ENCODE measurements at regions of chr19 and their contacts with region 1.

Region 1: GRCh38 chr19:57240311-57241090 is at the start of gene ZNF805:
- DNase-seq: peak; percentile 82 to 96 (median 93)
- ATAC-seq: peak; percentile 97
- H3K4me3 ChIP-seq: peak within 1 kb of the TSS; percentile 73
- H3K4me3 Mint-ChIP-seq: peak within 1 kb of the TSS; percentile 88 to 97 (median 94)
- H3K27ac ChIP-seq: peak within 1 kb of the TSS; percentile 95
- H3K27ac Mint-ChIP-seq: peak within 1 kb of the TSS; percentile 96 to 99 (median 97)
- H3K4me1 ChIP-seq: peaks cover 19% of the 10 kb centered on the region in 2 donors
- H3K4me1 Mint-ChIP-seq: peaks cover 20 to 44% (median 36%) of the 10 kb centered on the region in 7 donors
- H3K27me3 ChIP-seq: no peaks in the 10 kb centered on the region
- H3K27me3 Mint-ChIP-seq: peaks cover 0 to 3% (median 0%) of the 10 kb centered on the region in 5 donors
- total RNA-seq, gene ZNF805: 12.0 to 26.2 (median 23.7) TPM

Region 2: DNA sequence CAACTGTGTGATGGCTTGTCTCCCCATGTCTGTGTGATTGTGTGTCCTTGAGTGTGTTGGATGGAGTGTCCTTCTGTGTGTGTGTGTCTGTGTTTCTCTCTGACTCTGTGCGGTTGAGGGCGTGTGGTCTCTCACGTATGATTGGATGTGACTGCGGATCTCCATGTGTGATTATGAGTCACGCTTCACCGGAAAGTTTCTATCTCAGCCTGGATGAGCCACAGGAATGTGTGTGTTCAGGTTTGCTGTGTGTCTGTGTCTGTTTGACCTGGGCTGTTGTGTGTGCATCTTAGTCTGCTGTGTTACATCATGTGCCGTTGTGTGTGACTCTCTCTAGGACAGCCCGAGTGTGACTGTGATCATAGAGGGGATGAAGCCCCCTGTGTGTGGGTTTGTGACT is 553.5 kb before region 1 on chr19:
- CTCF ChIA-PET with region 1: no interaction called
- POLR2A ChIA-PET with region 1: no interaction called
- intact Hi-C with region 1: no loop called
- DNase-seq: no peak
- ATAC-seq: no peak
- H3K4me3 ChIP-seq: no peak overlapping the region
- H3K4me3 Mint-ChIP-seq: no peak overlapping the region
- H3K27ac ChIP-seq: no peak overlapping the region
- H3K27ac Mint-ChIP-seq: no peak overlapping the region
- H3K4me1 ChIP-seq: no peaks in the 10 kb centered on the region
- H3K4me1 Mint-ChIP-seq: no peaks in the 10 kb centered on the region
- H3K27me3 ChIP-seq: no peaks in the 10 kb centered on the region
- H3K27me3 Mint-ChIP-seq: no peaks in the 10 kb centered on the region

Region 3: DNA sequence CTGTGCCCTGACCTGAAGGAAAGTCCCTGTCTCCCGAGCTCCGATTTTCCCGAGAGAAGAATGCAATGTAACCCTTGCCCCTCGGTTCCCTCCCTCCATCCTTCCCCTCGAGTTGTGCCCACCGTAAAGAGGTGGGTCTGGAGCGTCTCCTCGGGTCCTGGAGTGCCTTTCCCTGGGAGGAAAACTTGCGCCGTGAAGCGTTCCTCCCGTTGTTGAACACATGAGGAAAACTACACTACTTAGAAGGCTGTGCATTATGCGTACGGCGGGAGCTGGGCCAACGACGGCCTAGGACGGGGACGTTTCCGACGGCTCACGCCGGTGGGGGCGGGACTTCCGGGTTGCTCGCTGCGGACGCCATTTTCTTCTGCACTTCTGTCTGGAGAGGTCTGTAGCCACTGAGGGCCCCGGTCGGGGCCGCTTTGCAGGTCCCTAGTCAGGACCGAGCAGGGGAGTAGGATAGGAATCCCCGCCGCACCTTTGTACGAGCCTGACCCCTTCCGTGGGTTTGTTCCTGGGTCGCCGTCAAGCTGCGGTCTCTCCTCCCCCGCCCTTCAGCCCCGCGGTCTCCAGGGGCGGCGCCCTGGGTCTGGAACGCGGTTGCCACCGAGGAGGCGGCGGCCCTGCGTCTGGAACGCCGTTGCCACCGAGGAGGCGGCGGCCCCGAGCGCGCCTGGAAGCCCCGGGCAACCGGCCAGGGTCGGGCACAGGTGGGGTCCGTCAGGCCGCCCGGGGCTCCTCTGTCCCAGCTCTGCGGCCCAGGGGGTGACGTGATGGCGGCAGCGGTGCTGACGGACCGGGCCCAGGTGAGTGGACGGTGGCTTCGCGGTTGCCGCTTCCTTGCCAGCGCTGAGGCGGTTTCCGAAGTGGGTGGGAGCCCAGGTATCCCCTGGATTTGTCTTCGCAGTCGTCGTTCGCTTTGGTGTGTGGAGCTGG is 49.1 kb before region 1 on chr19 and contains the start of gene ZNF264:
- CTCF ChIA-PET with region 1: no interaction called
- POLR2A ChIA-PET with region 1: interaction called, 7 read pairs
- intact Hi-C with region 1: loop called (anchors 1 kb)
- DNase-seq: peak; percentile 79 to 90 (median 86)
- ATAC-seq: peak; percentile 98
- H3K4me3 ChIP-seq: peak within 1 kb of the TSS; percentile 95
- H3K4me3 Mint-ChIP-seq: peak within 1 kb of the TSS; percentile 90 to 97 (median 94)
- H3K27ac ChIP-seq: peak within 1 kb of the TSS; percentile 85
- H3K27ac Mint-ChIP-seq: peak within 1 kb of the TSS; percentile 92 to 97 (median 95)
- H3K4me1 ChIP-seq: peaks cover 11 to 22% of the 10 kb centered on the region in 2 donors
- H3K4me1 Mint-ChIP-seq: peaks cover 20 to 40% (median 35%) of the 10 kb centered on the region in 7 donors
- H3K27me3 ChIP-seq: no peaks in the 10 kb centered on the region
- H3K27me3 Mint-ChIP-seq: peaks cover 0 to 11% (median 6%) of the 10 kb centered on the region in 5 donors
- total RNA-seq, gene ZNF264: 31.5 to 65.9 (median 44.3) TPM

Region 4: DNA sequence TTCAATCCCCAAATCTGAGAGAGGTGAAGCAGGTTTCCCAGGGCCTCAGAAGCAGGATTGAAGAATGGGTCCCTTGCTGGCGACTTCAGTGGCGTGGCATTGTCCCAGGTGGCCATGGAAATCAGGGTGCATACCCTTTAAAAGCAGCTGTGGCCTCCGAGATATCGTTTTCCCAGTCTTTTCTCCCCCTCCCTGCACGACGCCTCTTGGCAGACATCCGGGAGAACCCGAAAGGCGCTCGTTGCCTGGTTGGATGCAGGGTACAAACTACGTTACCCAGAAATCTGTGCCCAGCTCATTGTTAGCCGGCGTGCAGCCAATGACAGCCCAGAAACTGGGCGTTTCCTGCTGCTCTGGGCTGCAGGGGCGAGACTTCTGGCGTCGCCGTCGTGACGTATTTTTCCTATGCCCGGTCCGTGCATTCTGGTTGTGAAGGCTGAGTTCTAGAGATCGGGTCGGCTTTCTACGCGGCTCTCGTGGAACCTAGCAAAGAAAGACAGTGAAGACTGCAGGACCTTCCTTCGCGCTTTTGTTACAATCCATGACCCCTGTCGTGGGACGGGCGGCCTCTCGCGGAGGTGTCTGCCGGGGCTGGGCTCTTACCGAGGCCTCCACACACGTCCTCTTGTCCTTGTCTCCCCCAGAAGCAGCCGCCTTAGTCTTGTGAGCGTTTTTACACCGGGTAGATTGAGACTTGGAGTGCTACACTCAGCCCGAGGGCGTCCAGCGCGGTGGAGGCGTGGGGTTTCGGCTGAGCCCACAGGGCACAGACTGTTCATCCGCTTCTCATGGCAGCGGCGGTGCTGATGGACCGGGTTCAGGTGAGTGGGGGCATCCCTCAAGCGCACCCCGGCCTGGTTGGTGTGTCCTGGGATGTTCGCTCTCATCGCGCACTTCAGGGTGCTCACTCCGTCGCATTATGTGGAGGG is 110.6 kb after region 1 on chr19 and contains the start of gene ZNF304:
- CTCF ChIA-PET with region 1: no interaction called
- POLR2A ChIA-PET with region 1: no interaction called
- intact Hi-C with region 1: loop called (anchors 1 kb)
- DNase-seq: peak; percentile 51 to 85 (median 76)
- ATAC-seq: peak; percentile 100
- H3K4me3 ChIP-seq: peak within 1 kb of the TSS; percentile 83
- H3K4me3 Mint-ChIP-seq: peak within 1 kb of the TSS; percentile 93 to 97 (median 96)
- H3K27ac ChIP-seq: peak within 1 kb of the TSS; percentile 77
- H3K27ac Mint-ChIP-seq: peak within 1 kb of the TSS; percentile 80 to 96 (median 92)
- H3K4me1 ChIP-seq: peaks cover 11% of the 10 kb centered on the region in 2 donors
- H3K4me1 Mint-ChIP-seq: peaks cover 28 to 43% (median 32%) of the 10 kb centered on the region in 7 donors
- H3K27me3 ChIP-seq: no peaks in the 10 kb centered on the region
- H3K27me3 Mint-ChIP-seq: peaks cover 0 to 11% (median 7%) of the 10 kb centered on the region in 5 donors
- total RNA-seq, gene ZNF304: 6.0 to 12.5 (median 9.0) TPM

Region 5: DNA sequence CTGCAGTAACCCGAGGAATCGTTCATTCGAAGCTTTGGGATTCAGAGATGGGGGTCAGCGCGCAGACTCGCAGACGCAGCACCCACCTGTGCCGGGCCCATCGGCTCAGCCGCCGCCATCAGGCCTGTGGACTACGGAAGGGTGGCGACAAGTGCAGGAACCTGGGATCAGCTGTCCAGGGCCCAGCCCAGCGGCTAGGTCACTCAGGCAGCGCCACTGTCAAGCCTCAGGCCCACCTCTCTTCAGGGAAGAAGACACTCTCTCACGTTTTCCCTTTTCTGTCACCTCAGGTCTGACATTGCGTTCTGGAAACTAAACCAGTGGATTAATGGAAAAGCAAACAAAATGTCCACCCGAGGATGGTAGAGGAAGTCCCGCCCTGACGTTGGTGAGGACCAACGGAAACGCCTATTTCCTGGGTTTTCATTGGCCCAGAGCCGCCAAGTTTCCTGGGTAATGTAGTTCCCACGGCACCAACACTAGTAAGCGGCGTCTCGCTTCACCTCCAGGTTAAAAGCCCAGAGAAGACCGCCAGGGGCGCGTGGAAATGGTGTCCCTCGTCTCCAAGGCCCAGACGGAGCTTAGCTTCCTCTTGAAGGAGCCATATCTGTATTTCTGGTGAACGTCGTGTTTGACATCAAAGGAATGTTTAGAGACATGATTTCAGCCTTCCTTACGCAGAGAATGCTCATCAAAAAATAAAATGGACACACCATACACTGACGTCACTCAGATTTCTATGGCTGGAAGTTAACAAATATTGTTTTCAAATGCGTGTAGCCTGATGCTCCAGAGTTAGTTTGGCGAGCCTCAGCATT is 236.9 kb after region 1 on chr19 and contains the start of gene ZNF772:
- CTCF ChIA-PET with region 1: no interaction called
- POLR2A ChIA-PET with region 1: no interaction called
- intact Hi-C with region 1: loop called in 1 of 2 experiments (anchors 1 kb)
- DNase-seq: peak; percentile 55 to 96 (median 88)
- ATAC-seq: peak; percentile 99
- H3K4me3 ChIP-seq: peak within 1 kb of the TSS; percentile 80
- H3K4me3 Mint-ChIP-seq: peak within 1 kb of the TSS; percentile 87 to 95 (median 92)
- H3K27ac ChIP-seq: peak within 1 kb of the TSS; percentile 77
- H3K27ac Mint-ChIP-seq: peak within 1 kb of the TSS; percentile 84 to 96 (median 89)
- H3K4me1 ChIP-seq: peaks cover 5 to 12% of the 10 kb centered on the region in 2 donors
- H3K4me1 Mint-ChIP-seq: peaks cover 10 to 26% (median 19%) of the 10 kb centered on the region in 7 donors
- H3K27me3 ChIP-seq: no peaks in the 10 kb centered on the region
- H3K27me3 Mint-ChIP-seq: peaks cover 0 to 7% (median 0%) of the 10 kb centered on the region in 5 donors
- total RNA-seq, gene ZNF772: 1.5 to 20.5 (median 4.3) TPM

Region 6: GRCh38 chr19:57611113-57611512 is 370.6 kb after region 1 on chr19:
- CTCF ChIA-PET with region 1: no interaction called
- POLR2A ChIA-PET with region 1: no interaction called
- intact Hi-C with region 1: no loop called
- DNase-seq: no peak
- ATAC-seq: no peak
- H3K4me3 ChIP-seq: no peak overlapping the region
- H3K4me3 Mint-ChIP-seq: peak overlapping the region in 1 of 10 donors; percentile 41
- H3K27ac ChIP-seq: no peak overlapping the region
- H3K27ac Mint-ChIP-seq: no peak overlapping the region
- H3K4me1 ChIP-seq: peaks cover 14 to 15% of the 10 kb centered on the region in 2 donors
- H3K4me1 Mint-ChIP-seq: peaks cover 12 to 27% (median 23%) of the 10 kb centered on the region in 7 donors
- H3K27me3 ChIP-seq: no peaks in the 10 kb centered on the region
- H3K27me3 Mint-ChIP-seq: no peaks in the 10 kb centered on the region

Region 7: GRCh38 chr19:57746580-57747471 is 506.3 kb after region 1 on chr19 and contains the start of gene ZNF776:
- CTCF ChIA-PET with region 1: no interaction called
- POLR2A ChIA-PET with region 1: no interaction called
- intact Hi-C with region 1: loop called (anchors 1 to 2 kb)
- DNase-seq: peak; percentile 40 to 90 (median 84)
- ATAC-seq: peak; percentile 99
- H3K4me3 ChIP-seq: peak within 1 kb of the TSS; percentile 86
- H3K4me3 Mint-ChIP-seq: peak within 1 kb of the TSS; percentile 91 to 99 (median 94)
- H3K27ac ChIP-seq: peak within 1 kb of the TSS; percentile 85
- H3K27ac Mint-ChIP-seq: peak within 1 kb of the TSS; percentile 81 to 99 (median 94)
- H3K4me1 ChIP-seq: peaks cover 6 to 16% of the 10 kb centered on the region in 2 donors
- H3K4me1 Mint-ChIP-seq: peaks cover 13 to 40% (median 26%) of the 10 kb centered on the region in 7 donors
- H3K27me3 ChIP-seq: no peaks in the 10 kb centered on the region
- H3K27me3 Mint-ChIP-seq: no peaks in the 10 kb centered on the region
- total RNA-seq, gene ZNF776: 18.9 to 52.3 (median 21.8) TPM

Region 8: DNA sequence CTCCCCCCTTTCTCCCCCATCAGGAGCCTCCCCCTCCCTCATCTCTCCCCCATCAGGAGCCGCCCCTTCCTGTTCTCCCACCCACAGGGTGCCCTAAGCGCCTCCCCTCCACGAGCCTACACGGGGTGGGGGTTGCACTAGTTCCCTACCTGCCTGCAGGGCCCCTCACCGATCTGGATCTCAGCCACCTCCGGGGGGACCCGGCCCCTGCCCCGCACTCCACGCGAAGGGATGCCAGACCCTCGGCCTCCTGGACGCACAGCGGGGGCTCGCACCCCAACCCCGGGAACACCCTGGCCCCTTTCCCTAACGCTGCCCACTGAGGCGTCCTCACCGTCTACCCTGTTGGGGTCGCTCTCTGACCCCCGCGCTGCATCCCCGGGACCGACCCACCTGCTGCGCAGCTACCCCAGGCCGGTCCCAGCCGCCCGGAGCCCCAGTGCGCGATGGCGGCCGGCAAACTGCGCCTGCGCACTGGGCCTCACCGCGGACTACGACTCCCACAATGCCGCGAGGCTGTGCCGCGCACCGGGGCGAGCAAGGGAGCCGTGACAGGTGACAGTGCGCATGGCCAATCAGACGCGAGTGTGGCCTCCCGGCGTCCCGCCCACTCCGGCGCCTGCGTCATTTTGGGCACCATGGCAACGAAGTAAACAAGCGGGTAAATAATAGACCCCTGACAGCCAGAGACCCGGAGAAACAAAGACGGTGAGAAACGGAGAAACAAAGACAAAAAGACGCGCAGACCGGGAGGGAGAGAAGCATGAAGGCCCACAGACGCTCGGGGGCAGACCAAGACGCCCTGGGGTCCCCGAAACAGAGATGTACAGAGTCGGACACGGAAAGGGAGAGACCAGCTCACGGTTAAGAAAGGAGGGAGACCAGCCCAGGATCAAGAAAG is 857.5 kb after region 1 on chr19 and contains the start of gene ZSCAN18:
- CTCF ChIA-PET with region 1: no interaction called
- POLR2A ChIA-PET with region 1: no interaction called
- intact Hi-C with region 1: loop called in 1 of 2 experiments (anchors 1 kb)
- DNase-seq: peak; percentile 77 to 100 (median 99)
- ATAC-seq: peak; percentile 97
- H3K4me3 ChIP-seq: peak within 1 kb of the TSS; percentile 86
- H3K4me3 Mint-ChIP-seq: peak within 1 kb of the TSS; percentile 83 to 100 (median 91)
- H3K27ac ChIP-seq: peak within 1 kb of the TSS; percentile 100
- H3K27ac Mint-ChIP-seq: peak within 1 kb of the TSS; percentile 98 to 100 (median 100)
- H3K4me1 ChIP-seq: peaks cover 0 to 11% of the 10 kb centered on the region in 2 donors
- H3K4me1 Mint-ChIP-seq: peaks cover 8 to 18% (median 15%) of the 10 kb centered on the region in 7 donors
- H3K27me3 ChIP-seq: no peaks in the 10 kb centered on the region
- H3K27me3 Mint-ChIP-seq: no peaks in the 10 kb centered on the region
- total RNA-seq, gene ZSCAN18: 8.2 to 100 (median 78.1) TPM